ENCODE measurements at regions of chr17 and their contacts with region 1.

Region 1: GRCh38 chr17:76726231-76726775 is at the start of gene JMJD6:
- DNase-seq: peak in 5 of 9 donors; percentile 92 to 95 (median 93)
- ATAC-seq: peak; percentile 88
- H3K4me3 ChIP-seq: peak within 1 kb of the TSS; percentile 90
- H3K4me3 Mint-ChIP-seq: peak within 1 kb of the TSS; percentile 93 to 100 (median 98)
- H3K27ac ChIP-seq: peak within 1 kb of the TSS; percentile 97
- H3K27ac Mint-ChIP-seq: peak within 1 kb of the TSS; percentile 98 to 99 (median 99)
- H3K4me1 ChIP-seq: peaks cover 36 to 45% of the 10 kb centered on the region in 2 donors
- H3K4me1 Mint-ChIP-seq: peaks cover 19 to 76% (median 43%) of the 10 kb centered on the region in 7 donors
- H3K27me3 ChIP-seq: no peaks in the 10 kb centered on the region
- H3K27me3 Mint-ChIP-seq: no peaks in the 10 kb centered on the region
- total RNA-seq, gene JMJD6: 39.9 to 132 (median 58.3) TPM

Region 2: GRCh38 chr17:76515274-76515949 is 210.9 kb before region 1 on chr17:
- CTCF ChIA-PET with region 1: no interaction called
- POLR2A ChIA-PET with region 1: no interaction called
- intact Hi-C with region 1: loop called in 1 of 2 experiments (anchors 1 kb)
- DNase-seq: peak; percentile 62 to 94 (median 90)
- ATAC-seq: peak; percentile 90
- H3K4me3 ChIP-seq: peak overlapping the region; percentile 12
- H3K4me3 Mint-ChIP-seq: peak overlapping the region; percentile 75 to 89 (median 82)
- H3K27ac ChIP-seq: peak overlapping the region; percentile 96
- H3K27ac Mint-ChIP-seq: peak overlapping the region; percentile 95 to 100 (median 99)
- H3K4me1 ChIP-seq: peaks cover 36 to 58% of the 10 kb centered on the region in 2 donors
- H3K4me1 Mint-ChIP-seq: peaks cover 25 to 67% (median 37%) of the 10 kb centered on the region in 7 donors
- H3K27me3 ChIP-seq: no peaks in the 10 kb centered on the region
- H3K27me3 Mint-ChIP-seq: peaks cover 0 to 5% (median 0%) of the 10 kb centered on the region in 5 donors

Region 3: DNA sequence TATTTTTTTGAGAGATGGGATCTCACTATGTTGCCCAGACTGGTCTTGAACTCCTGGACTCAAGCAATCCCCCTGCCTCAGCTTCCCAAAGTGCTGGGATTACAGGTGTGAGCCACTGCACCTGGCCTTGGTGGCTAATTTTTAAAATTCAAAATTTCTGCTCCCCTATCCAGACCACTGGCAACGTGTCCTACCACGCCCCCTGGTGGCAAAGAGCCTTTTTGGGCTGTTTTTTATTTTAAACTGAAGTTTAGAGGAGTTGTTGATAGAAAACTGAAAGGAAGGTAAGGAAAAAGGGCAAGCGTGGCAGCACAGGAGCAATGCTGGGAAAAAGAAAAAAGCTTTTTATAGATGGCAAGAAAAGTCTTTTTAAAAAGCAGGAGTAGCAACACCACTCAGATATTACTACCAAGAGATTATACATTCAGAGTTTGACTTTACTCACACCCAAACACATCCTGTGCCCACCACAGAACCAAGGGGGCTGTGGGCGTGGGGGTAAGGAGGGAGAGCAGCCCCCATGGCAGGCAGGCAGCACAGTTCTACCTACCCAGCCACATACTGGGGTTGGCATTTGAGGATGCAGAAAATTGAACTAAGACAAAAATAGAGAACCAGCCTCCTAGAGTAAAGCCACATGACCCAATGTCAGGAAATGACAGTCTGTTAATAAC is 11.3 kb before region 1 on chr17:
- CTCF ChIA-PET with region 1: interaction called, 35 read pairs
- POLR2A ChIA-PET with region 1: interaction called, 17 read pairs
- intact Hi-C with region 1: loop called (anchors 1 kb)
- DNase-seq: peak; percentile 60 to 83 (median 70)
- ATAC-seq: peak; percentile 18
- H3K4me3 ChIP-seq: no peak overlapping the region
- H3K4me3 Mint-ChIP-seq: peak overlapping the region in 5 of 10 donors; percentile 1 to 41 (median 2)
- H3K27ac ChIP-seq: peak overlapping the region; percentile 32
- H3K27ac Mint-ChIP-seq: peak overlapping the region; percentile 22 to 82 (median 75)
- H3K4me1 ChIP-seq: peaks cover 14 to 30% of the 10 kb centered on the region in 2 donors
- H3K4me1 Mint-ChIP-seq: peaks cover 27 to 48% (median 41%) of the 10 kb centered on the region in 7 donors
- H3K27me3 ChIP-seq: no peaks in the 10 kb centered on the region
- H3K27me3 Mint-ChIP-seq: peaks cover 0 to 2% (median 0%) of the 10 kb centered on the region in 5 donors

Region 4: DNA sequence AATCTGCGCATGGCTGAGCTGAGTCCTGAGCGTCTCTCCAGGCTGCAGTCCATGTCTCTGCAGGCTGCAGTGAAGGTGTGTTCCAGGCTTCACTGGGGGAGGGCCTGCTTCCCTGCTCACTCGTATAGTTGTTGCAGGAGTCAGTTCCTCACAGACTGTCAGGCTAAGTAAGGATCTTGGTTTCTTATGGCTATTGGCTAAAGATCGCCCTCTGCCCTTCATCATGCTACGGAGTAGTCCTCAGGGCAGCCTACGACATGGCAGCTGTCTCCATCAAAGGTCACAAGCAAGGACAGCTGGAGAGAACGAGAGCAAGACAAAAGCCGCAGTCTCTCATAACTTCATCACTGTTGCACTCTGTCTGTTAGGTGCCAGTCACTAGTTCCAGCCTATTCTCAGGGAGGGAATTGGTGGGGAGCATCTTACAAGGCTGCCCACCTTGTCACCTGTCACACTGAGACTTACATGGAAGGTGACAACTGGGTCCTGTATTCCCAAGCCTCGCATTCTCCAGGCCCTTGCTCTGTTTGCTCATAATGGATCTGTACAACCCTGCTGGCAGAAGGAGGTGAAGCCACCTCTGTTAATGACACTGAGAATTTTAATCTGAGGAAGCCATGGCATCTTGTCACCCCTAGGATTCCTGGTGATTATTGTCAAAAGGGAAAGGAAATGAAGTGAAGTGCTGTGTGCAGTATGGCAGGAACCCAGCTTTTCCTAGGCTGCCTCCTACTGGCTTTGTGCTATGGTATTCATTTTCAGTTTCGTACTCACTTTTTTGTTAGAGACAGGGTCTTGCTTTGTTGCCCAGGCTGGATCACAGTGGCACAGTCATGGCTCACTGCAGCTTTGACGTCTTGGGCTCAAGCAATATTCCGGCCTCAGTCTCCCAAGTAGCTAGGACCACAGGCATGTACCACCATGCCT is 55.0 kb after region 1 on chr17:
- CTCF ChIA-PET with region 1: interaction called, 5 read pairs
- POLR2A ChIA-PET with region 1: interaction called, 3 read pairs
- intact Hi-C with region 1: loop called in 1 of 2 experiments (anchors 1 kb)
- DNase-seq: peak in 5 of 9 donors; percentile 9 to 34 (median 16)
- ATAC-seq: peak; percentile 44
- H3K4me3 ChIP-seq: no peak overlapping the region
- H3K4me3 Mint-ChIP-seq: no peak overlapping the region
- H3K27ac ChIP-seq: no peak overlapping the region
- H3K27ac Mint-ChIP-seq: peak overlapping the region in 2 of 9 donors; percentile 47 to 64
- H3K4me1 ChIP-seq: no peaks in the 10 kb centered on the region
- H3K4me1 Mint-ChIP-seq: peaks cover 0 to 6% (median 0%) of the 10 kb centered on the region in 7 donors
- H3K27me3 ChIP-seq: no peaks in the 10 kb centered on the region
- H3K27me3 Mint-ChIP-seq: no peaks in the 10 kb centered on the region

Region 5: DNA sequence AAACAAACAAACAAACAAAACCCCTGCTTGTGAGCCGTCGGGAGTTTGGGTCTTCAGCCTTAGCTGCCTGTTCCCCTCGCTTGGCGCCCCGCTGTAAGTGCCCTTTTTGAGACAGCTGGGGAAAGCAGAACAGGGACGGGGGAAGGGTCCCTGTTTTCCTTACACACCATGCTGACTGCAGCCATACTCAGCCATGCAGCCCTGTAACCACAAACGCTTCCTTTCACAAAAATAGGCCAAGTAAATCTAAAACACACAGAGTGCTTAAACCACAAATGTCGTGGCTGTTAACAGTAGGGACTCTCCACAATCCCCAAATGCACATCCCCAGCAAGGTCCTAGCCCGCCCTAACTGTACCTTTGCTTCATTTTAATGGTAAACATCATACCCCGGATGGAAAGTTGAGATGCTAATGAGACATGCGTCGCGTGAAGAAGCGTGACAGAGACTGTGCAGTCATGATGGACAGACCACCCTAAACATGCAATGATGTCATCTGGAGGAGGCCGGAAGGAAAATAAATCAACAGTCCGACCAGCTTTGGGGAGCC is 271.8 kb after region 1 on chr17:
- CTCF ChIA-PET with region 1: no interaction called
- POLR2A ChIA-PET with region 1: no interaction called
- intact Hi-C with region 1: loop called in 1 of 2 experiments (anchors 2 kb)
- DNase-seq: peak in 8 of 9 donors; percentile 45 to 89 (median 80)
- ATAC-seq: peak; percentile 95
- H3K4me3 ChIP-seq: peak overlapping the region; percentile 52
- H3K4me3 Mint-ChIP-seq: peak overlapping the region; percentile 58 to 88 (median 74)
- H3K27ac ChIP-seq: peak overlapping the region; percentile 70
- H3K27ac Mint-ChIP-seq: peak overlapping the region; percentile 84 to 99 (median 93)
- H3K4me1 ChIP-seq: peaks cover 33 to 57% of the 10 kb centered on the region in 2 donors
- H3K4me1 Mint-ChIP-seq: peaks cover 27 to 74% (median 57%) of the 10 kb centered on the region in 7 donors
- H3K27me3 ChIP-seq: no peaks in the 10 kb centered on the region
- H3K27me3 Mint-ChIP-seq: no peaks in the 10 kb centered on the region

Region 6: GRCh38 chr17:77140166-77140878 is 414.0 kb after region 1 on chr17:
- CTCF ChIA-PET with region 1: no interaction called
- POLR2A ChIA-PET with region 1: no interaction called
- intact Hi-C with region 1: loop called (anchors 2 kb)
- DNase-seq: peak; percentile 98 to 100 (median 99)
- ATAC-seq: peak; percentile 96
- H3K4me3 ChIP-seq: peak overlapping the region; percentile 74
- H3K4me3 Mint-ChIP-seq: peak overlapping the region; percentile 65 to 87 (median 80)
- H3K27ac ChIP-seq: peak overlapping the region; percentile 88
- H3K27ac Mint-ChIP-seq: peak overlapping the region; percentile 75 to 93 (median 90)
- H3K4me1 ChIP-seq: peaks cover 14 to 28% of the 10 kb centered on the region in 2 donors
- H3K4me1 Mint-ChIP-seq: peaks cover 32 to 73% (median 66%) of the 10 kb centered on the region in 7 donors
- H3K27me3 ChIP-seq: no peaks in the 10 kb centered on the region
- H3K27me3 Mint-ChIP-seq: no peaks in the 10 kb centered on the region

Measured in naive thymus-derived CD4-positive, alpha-beta T cell (primary cell).